ENCODE measurements at regions of chr15 and their contacts with region 1.

Region 1: DNA sequence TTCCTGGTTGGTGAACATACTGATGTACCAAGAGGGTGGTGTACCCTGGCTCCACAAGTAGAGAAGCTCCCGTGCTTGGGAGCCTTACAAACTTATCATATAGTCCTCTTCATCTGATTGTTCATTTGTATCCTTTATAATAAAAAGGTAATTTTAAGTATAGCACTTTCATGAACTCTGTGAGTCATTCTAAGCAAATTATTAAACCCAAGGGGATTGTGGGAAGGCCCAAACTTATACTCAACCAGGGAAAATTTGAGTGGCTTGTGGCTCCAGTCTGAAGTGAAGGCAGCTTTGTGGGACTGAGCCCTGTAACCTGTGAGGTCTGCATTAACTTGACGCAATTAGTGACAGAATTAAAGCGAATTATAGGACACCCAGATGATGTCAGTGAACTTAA is 29.0 kb downstream of the TTBK2 start:
- DNase-seq: no peak
- ATAC-seq: peak; percentile 82
- H3K4me3 Mint-ChIP-seq: no peak overlapping the region
- H3K27ac Mint-ChIP-seq: no peak overlapping the region
- H3K4me1 Mint-ChIP-seq: peaks cover 10% of the 10 kb centered on the region
- H3K27me3 Mint-ChIP-seq: no peaks in the 10 kb centered on the region
- CTCF ChIP-seq: no peak

Region 2: DNA sequence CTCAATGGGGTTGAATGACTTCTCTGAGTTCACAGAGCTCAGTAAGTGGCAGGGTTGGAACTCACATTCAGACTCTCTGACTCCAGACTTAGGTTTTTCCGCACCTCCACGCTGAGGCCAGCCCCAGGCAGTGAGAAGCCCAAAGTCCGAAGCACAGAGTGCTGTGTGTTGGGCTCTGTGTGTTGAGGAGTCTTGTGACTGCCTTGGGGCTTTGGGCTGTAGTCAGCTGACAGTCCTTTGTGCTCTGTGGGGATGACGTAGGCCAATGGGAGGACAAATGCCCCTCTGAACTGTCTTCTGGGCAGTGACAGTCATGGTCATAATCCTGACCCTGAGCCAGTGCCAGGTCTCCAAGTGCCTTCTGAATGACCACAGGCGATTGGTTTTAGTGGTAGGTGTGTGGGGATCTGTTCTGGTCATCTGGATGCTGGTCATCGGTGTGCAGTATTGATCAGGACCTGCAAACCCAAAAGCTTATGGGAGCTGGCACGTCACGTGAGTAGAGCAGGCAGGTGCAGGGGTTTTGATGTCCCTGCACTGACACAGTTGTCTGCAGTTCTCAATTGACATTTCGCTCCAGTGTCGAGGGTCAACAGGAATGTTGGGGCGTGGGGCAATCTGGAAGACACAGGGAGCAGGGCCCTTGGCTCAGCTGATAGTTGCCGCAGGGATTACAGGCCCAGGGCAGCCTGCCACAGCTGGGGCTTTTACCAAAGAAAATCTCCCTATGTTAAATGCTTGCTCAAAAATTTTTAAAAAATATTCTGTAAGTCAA is 486.9 kb before region 1 on chr15:
- CTCF ChIA-PET with region 1: no interaction called
- POLR2A ChIA-PET with region 1: no interaction called
- intact Hi-C with region 1: no loop called
- DNase-seq: no peak
- ATAC-seq: no peak
- H3K4me3 Mint-ChIP-seq: no peak overlapping the region
- H3K27ac Mint-ChIP-seq: no peak overlapping the region
- H3K4me1 Mint-ChIP-seq: peaks cover 6% of the 10 kb centered on the region
- H3K27me3 Mint-ChIP-seq: no peaks in the 10 kb centered on the region
- CTCF ChIP-seq: no peak

Region 3: GRCh38 chr15:42421376-42421775 is 470.2 kb before region 1 on chr15:
- CTCF ChIA-PET with region 1: no interaction called
- POLR2A ChIA-PET with region 1: no interaction called
- intact Hi-C with region 1: no loop called
- DNase-seq: no peak
- ATAC-seq: no peak
- H3K4me3 Mint-ChIP-seq: no peak overlapping the region
- H3K27ac Mint-ChIP-seq: no peak overlapping the region
- H3K4me1 Mint-ChIP-seq: no peaks in the 10 kb centered on the region
- H3K27me3 Mint-ChIP-seq: no peaks in the 10 kb centered on the region
- CTCF ChIP-seq: no peak

Region 4: DNA sequence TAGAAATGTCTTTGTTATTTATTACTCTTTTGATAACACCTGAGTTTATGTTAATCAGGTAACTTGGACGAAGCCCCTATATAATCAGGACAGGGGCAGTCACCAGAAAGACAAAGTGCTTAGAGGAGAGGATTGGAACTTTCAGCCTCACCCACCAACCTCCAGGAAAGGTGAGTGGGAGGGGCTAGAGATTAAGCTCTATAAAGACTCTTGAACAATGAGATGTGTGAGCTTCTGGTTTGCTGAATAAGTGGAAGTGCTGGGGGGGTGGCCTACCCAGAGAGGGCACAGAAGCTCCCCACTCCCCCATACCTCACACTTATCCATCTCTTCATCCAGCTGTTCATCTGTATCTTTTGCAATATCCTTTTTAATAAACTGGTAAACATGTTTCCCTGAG is 44.9 kb before region 1 on chr15:
- CTCF ChIA-PET with region 1: no interaction called
- POLR2A ChIA-PET with region 1: interaction called, 12 read pairs
- intact Hi-C with region 1: no loop called
- DNase-seq: no peak
- ATAC-seq: no peak
- H3K4me3 Mint-ChIP-seq: no peak overlapping the region
- H3K27ac Mint-ChIP-seq: no peak overlapping the region
- H3K4me1 Mint-ChIP-seq: no peaks in the 10 kb centered on the region
- H3K27me3 Mint-ChIP-seq: no peaks in the 10 kb centered on the region
- CTCF ChIP-seq: no peak

Region 5: GRCh38 chr15:42903388-42904324 is 12.1 kb after region 1 on chr15:
- CTCF ChIA-PET with region 1: no interaction called
- POLR2A ChIA-PET with region 1: no interaction called
- intact Hi-C with region 1: no loop called
- DNase-seq: no peak
- ATAC-seq: no peak
- H3K4me3 Mint-ChIP-seq: no peak overlapping the region
- H3K27ac Mint-ChIP-seq: no peak overlapping the region
- H3K4me1 Mint-ChIP-seq: peaks cover 8% of the 10 kb centered on the region
- H3K27me3 Mint-ChIP-seq: no peaks in the 10 kb centered on the region
- CTCF ChIP-seq: no peak